H1 (cell line): ENCODE measurements at regions of chr2 and their contacts with region 1.

Region 1: GRCh38 chr2:23656597-23656973 is 270.3 kb downstream of the ATAD2B start:
- DNase-seq: no peak
- H3K4me3 ChIP-seq: no peak overlapping the region
- H3K27ac ChIP-seq: no peak overlapping the region
- H3K4me1 ChIP-seq: no peaks in the 10 kb centered on the region; a peak in 1 of 7 replicates
- H3K27me3 ChIP-seq: no peaks in the 10 kb centered on the region
- CTCF ChIP-seq: no peak
- EP300 ChIP-seq: no peak
- POLR2A ChIP-seq: no peak
- RAD21 ChIP-seq: no peak

Region 2: DNA sequence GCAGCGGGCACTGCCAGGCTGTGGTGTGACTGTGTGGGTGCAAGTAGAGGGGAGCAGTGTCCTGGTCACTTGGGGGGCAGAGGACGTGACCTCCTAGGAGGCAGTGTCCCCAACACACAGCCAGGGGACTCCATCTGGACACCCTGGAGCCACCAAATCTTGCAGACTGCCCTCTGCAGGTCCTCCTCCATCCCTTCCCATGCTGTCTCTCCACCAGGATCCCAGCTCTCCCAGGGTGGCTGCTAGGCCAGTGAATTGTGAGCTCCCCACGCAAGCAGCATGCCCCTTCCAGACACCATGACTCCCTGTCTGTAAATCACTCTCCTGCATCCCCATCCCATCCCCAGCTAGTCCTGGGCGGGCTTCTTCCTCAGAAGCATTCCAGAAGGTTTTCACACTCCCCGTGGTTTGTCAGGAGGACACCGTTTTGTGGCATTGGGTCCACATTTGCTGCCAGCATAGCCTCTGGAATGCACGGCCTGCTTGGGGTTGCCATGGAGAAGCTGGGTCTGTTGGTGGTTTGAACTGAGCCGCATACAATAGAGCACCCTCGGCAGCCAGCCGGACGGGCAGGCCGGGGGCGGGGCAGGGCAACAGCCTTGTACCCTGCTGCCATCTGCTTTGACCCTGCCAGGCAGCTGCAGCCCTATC is 60.9 kb before region 1 on chr2:
- CTCF ChIA-PET with region 1: no interaction called
- POLR2A ChIA-PET with region 1: no interaction called
- DNase-seq: no peak
- H3K4me3 ChIP-seq: no peak overlapping the region
- H3K27ac ChIP-seq: no peak overlapping the region
- H3K4me1 ChIP-seq: peaks cover 0 to 4% (median under 1%) of the 10 kb centered on the region in 4 experiments; a peak in 3 of 7 replicates
- H3K27me3 ChIP-seq: no peaks in the 10 kb centered on the region
- CTCF ChIP-seq: peak in 1 of 3 experiments; percentile 22; a peak in 1 of 4 replicates
- EP300 ChIP-seq: no peak
- POLR2A ChIP-seq: no peak
- RAD21 ChIP-seq: no peak

Region 3: DNA sequence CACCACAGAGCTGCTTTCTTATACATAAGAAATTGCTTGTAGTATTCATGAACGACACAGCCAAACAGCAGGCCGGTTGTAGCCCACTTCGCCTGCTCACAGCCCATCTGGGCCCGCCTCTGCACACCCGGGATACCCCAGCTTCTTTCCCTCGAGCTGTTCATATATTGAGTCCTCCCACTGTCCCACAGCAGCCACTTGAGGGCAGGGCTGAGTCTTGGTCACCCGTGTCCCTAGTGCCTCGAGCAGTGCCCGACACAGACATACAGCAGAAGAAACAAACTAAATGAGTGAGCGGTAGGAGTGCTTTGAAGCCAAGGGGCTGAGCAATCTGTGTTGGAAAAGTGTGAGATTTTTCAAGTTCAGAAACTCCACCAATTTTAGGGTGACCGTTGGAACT is 20.2 kb before region 1 on chr2:
- CTCF ChIA-PET with region 1: interaction called, 19 read pairs
- POLR2A ChIA-PET with region 1: no interaction called
- DNase-seq: no peak
- H3K4me3 ChIP-seq: no peak overlapping the region
- H3K27ac ChIP-seq: no peak overlapping the region
- H3K4me1 ChIP-seq: no peaks in the 10 kb centered on the region; a peak in 1 of 7 replicates
- H3K27me3 ChIP-seq: no peaks in the 10 kb centered on the region
- CTCF ChIP-seq: peak; percentile 49 to 55 (median 50)
- EP300 ChIP-seq: no peak
- POLR2A ChIP-seq: no peak
- RAD21 ChIP-seq: peak; percentile 46 to 64

Region 4: GRCh38 chr2:23760736-23761135 is 104.2 kb after region 1 on chr2:
- CTCF ChIA-PET with region 1: no interaction called
- POLR2A ChIA-PET with region 1: no interaction called
- DNase-seq: no peak
- H3K4me3 ChIP-seq: no peak overlapping the region
- H3K27ac ChIP-seq: no peak overlapping the region
- H3K4me1 ChIP-seq: no peaks in the 10 kb centered on the region
- H3K27me3 ChIP-seq: no peaks in the 10 kb centered on the region
- CTCF ChIP-seq: no peak
- EP300 ChIP-seq: no peak
- POLR2A ChIP-seq: no peak
- RAD21 ChIP-seq: peak in 1 of 2 experiments; percentile 28; a peak in 2 of 4 replicates

Region 5: GRCh38 chr2:23944527-23944926 is 287.9 kb after region 1 on chr2:
- CTCF ChIA-PET with region 1: no interaction called
- POLR2A ChIA-PET with region 1: no interaction called
- DNase-seq: no peak
- H3K4me3 ChIP-seq: no peak overlapping the region
- H3K27ac ChIP-seq: no peak overlapping the region
- H3K4me1 ChIP-seq: peaks cover 0 to 3% (median 2%) of the 10 kb centered on the region in 4 experiments; a peak in 4 of 7 replicates
- H3K27me3 ChIP-seq: no peaks in the 10 kb centered on the region
- CTCF ChIP-seq: no peak
- EP300 ChIP-seq: no peak
- POLR2A ChIP-seq: no peak
- RAD21 ChIP-seq: no peak